ENCODE measurements at regions of chr15 and their contacts with region 1.

Region 1: GRCh38 chr15:90931737-90932659 is at the start of gene HDDC3:
- DNase-seq: peak; percentile 63
- ATAC-seq: peak; percentile 74
- H3K4me3 ChIP-seq: peak within 1 kb of the TSS; percentile 90
- H3K27ac ChIP-seq: peak within 1 kb of the TSS; percentile 85
- H3K4me1 ChIP-seq: peaks cover 35% of the 10 kb centered on the region
- H3K27me3 ChIP-seq: no peaks in the 10 kb centered on the region
- CTCF ChIP-seq: peak; percentile 91 to 98 (median 92)
- EP300 ChIP-seq: no peak
- POLR2A ChIP-seq: peak; percentile 86
- RAD21 ChIP-seq: peak; percentile 54; the same call in 1 of the 2 replicates
- polyA plus RNA-seq, gene HDDC3: 5.6 to 9.0 TPM

Region 2: GRCh38 chr15:90320061-90320884 is 611.7 kb before region 1 on chr15:
- CTCF ChIA-PET with region 1: interaction called, 39 read pairs
- POLR2A ChIA-PET with region 1: no interaction called
- RAD21 ChIA-PET with region 1: interaction called, 10 read pairs
- SMC1A ChIA-PET with region 1: interaction called, 12 read pairs
- in situ Hi-C with region 1: no loop called
- intact Hi-C with region 1: loop called (anchors 1 kb)
- DNase-seq: peak; percentile 45
- ATAC-seq: peak; percentile 100
- H3K4me3 ChIP-seq: no peak overlapping the region
- H3K27ac ChIP-seq: no peak overlapping the region
- H3K4me1 ChIP-seq: no peaks in the 10 kb centered on the region
- H3K27me3 ChIP-seq: no peaks in the 10 kb centered on the region
- CTCF ChIP-seq: peak; percentile 98 to 99 (median 98); a peak in 5 of 6 replicates
- EP300 ChIP-seq: no peak
- POLR2A ChIP-seq: no peak
- RAD21 ChIP-seq: peak; percentile 93

Region 3: DNA sequence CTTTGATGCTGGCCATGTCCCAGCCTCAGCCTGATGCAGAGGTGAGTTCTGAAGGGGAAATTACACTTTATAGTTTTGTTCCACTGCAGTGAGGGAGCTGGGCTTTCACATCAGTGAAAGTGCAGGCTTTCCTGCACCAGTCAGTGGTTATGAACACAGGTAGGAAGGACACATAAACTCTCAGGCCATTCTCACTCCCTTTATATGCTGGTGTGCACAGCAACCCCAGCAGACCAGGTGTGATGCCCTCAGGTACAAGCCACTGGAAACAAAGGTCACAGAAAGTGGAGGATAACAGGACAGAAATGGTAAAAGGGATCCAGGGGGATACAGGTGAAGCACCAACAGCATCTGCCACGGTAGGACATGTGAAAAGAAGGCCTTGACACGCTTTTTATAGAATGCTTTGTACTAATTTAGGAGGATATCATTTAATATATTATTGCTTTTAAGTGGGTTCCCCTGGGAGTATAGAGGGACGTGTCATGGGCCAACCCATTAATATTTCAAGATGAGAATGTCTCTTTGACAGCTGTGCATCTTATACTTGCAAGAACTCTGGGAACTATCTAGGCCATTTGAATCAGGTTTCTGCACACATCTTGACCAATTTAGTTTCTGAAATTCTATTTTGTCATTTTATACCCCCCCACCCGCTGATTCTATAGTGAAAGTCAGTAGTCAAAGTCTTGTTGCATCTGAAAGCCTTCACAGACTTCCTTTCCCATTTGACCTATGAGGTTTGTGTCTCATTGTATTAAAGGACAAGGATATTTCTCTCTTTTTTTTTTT is 239.8 kb before region 1 on chr15:
- CTCF ChIA-PET with region 1: interaction called, 20 read pairs
- POLR2A ChIA-PET with region 1: interaction called, 7 read pairs
- RAD21 ChIA-PET with region 1: interaction called, 4 read pairs
- SMC1A ChIA-PET with region 1: interaction called, 5 read pairs
- in situ Hi-C with region 1: no loop called
- intact Hi-C with region 1: no loop called
- DNase-seq: peak; percentile 84
- ATAC-seq: peak; percentile 73
- H3K4me3 ChIP-seq: no peak overlapping the region
- H3K27ac ChIP-seq: peak overlapping the region; percentile 99
- H3K4me1 ChIP-seq: peaks cover 41% of the 10 kb centered on the region
- H3K27me3 ChIP-seq: no peaks in the 10 kb centered on the region
- CTCF ChIP-seq: no peak
- EP300 ChIP-seq: no peak
- POLR2A ChIP-seq: peak; percentile 68
- RAD21 ChIP-seq: peak; percentile 19; the same call in 1 of the 2 replicates

Region 4: DNA sequence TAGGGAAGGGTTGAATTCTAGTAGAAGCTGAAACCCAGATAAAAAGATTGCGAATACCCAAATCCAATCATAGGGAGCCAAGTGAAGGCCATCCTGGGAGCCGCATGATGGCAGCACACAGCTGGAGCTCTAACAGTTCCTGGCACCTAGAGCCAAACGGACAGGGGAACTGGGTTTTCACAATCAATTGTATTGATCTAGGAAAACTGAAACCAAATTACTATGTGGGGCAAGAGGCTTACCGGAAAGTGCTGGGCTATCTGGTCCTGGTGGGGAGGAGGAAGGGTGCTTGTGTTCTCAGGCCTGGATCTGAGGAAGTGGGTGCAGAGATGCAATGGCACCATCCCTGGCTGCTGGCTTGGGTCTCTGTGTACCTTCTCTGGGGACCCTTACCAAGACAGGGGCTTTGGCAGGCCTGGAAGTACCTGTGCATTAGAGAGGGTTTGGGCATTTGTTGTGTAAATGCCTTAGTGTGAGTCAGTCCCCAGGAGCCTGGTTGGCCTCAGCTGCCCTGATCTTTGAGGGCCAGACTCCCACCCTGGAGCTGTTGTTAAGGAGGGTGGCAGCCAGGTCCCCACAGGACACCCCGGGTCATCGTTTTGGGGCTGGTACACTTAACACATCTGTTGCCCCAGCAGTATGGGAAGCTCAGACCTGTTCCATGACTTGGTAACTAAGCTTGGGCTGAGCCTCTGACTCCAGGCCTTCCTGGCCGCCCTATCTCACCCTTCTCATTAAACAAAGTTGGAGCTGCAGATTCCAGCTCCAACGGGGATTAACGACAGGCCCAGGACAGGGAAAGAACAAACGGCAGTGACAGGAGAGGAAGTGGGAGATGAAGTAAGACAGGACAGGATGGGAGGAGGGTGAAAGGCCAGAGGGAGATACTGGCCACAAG is 72.5 kb before region 1 on chr15:
- CTCF ChIA-PET with region 1: interaction called, 11 read pairs
- POLR2A ChIA-PET with region 1: no interaction called
- RAD21 ChIA-PET with region 1: no interaction called
- SMC1A ChIA-PET with region 1: no interaction called
- in situ Hi-C with region 1: no loop called
- intact Hi-C with region 1: loop called (anchors 10 kb)
- DNase-seq: no peak
- ATAC-seq: no peak
- H3K4me3 ChIP-seq: no peak overlapping the region
- H3K27ac ChIP-seq: no peak overlapping the region
- H3K4me1 ChIP-seq: peaks cover 26% of the 10 kb centered on the region
- H3K27me3 ChIP-seq: no peaks in the 10 kb centered on the region
- CTCF ChIP-seq: no peak
- EP300 ChIP-seq: no peak
- POLR2A ChIP-seq: no peak
- RAD21 ChIP-seq: no peak

Region 5: GRCh38 chr15:90902040-90902839 is 29.8 kb before region 1 on chr15:
- CTCF ChIA-PET with region 1: interaction called, 480 read pairs
- POLR2A ChIA-PET with region 1: interaction called, 113 read pairs
- RAD21 ChIA-PET with region 1: interaction called, 193 read pairs
- SMC1A ChIA-PET with region 1: interaction called, 225 read pairs
- in situ Hi-C with region 1: no loop called
- intact Hi-C with region 1: loop called (anchors 1 kb)
- DNase-seq: peak; percentile 59
- ATAC-seq: peak; percentile 87
- H3K4me3 ChIP-seq: peak overlapping the region; percentile 67
- H3K27ac ChIP-seq: peak overlapping the region; percentile 62
- H3K4me1 ChIP-seq: peaks cover 20% of the 10 kb centered on the region
- H3K27me3 ChIP-seq: no peaks in the 10 kb centered on the region
- CTCF ChIP-seq: peak; percentile 85 to 89 (median 85)
- EP300 ChIP-seq: no peak
- POLR2A ChIP-seq: peak; percentile 75
- RAD21 ChIP-seq: peak; percentile 45; the same call in 1 of the 2 replicates

Region 6: GRCh38 chr15:91032919-91033803 is 101.2 kb after region 1 on chr15:
- CTCF ChIA-PET with region 1: interaction called, 16 read pairs
- POLR2A ChIA-PET with region 1: no interaction called
- RAD21 ChIA-PET with region 1: interaction called, 6 read pairs
- SMC1A ChIA-PET with region 1: interaction called, 3 read pairs
- in situ Hi-C with region 1: no loop called
- intact Hi-C with region 1: no loop called
- DNase-seq: no peak
- ATAC-seq: peak; percentile 94
- H3K4me3 ChIP-seq: no peak overlapping the region
- H3K27ac ChIP-seq: no peak overlapping the region
- H3K4me1 ChIP-seq: no peaks in the 10 kb centered on the region
- H3K27me3 ChIP-seq: no peaks in the 10 kb centered on the region; a peak in 1 of 4 replicates
- CTCF ChIP-seq: peak; percentile 62 to 86 (median 66)
- EP300 ChIP-seq: no peak
- POLR2A ChIP-seq: no peak
- RAD21 ChIP-seq: peak; percentile 61; the same call in 1 of the 2 replicates

Measured in GM12878 (cell line).